ENCODE measurements at regions of chr2 and their contacts with region 1.

Region 1: DNA sequence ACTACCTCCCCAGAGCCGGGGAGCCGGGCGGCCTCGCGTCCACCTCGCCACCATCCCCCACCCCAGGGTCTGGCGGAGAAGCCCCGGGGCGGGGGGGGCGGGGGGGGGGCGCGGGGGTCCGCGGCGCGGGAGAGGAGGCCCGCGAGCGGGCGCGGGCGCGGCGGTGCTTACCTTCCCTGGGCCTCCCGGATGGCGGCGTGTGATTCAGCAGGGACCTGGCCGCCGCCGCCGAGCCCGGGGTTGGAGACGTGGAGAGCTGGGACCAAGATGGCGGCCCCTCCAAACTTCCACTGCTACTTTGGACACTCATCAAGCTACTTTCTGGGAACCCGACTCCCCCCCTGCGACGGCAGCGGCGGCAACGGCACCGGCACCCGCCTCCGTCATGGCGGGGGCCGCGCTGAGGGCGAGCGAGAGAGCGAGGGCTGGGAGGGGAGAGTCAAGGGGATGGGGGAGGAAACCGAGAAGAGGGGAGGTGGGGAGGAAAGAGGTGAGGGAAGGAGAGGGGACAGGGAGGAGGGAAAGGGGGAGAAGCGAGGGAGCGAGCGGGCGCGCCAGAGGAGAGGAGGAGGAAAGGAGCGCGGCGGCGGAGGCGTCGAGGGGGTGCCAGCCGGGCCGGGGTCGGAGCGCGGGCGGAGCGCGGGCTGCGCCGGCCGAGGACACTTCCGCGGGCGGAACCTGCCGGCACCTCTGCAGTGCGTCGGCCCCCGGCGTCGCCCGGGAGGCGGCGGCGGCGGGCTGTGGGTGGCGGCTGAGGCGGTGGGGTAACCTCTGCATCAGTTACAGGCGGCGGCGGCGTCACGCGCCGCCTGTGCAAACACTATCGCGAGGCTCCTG is at the start of gene TLK1:
- DNase-seq: peak; percentile 50 to 72
- ATAC-seq: peak; percentile 79 to 81
- H3K4me3 ChIP-seq: peak within 1 kb of the TSS; percentile 89 to 97 (median 96)
- H3K27ac ChIP-seq: peak within 1 kb of the TSS; percentile 98 to 99 (median 98)
- H3K4me1 ChIP-seq: peaks cover 23 to 28% of the 10 kb centered on the region in 2 donors
- H3K27me3 ChIP-seq: no peaks in the 10 kb centered on the region
- CTCF ChIP-seq: peak in 2 of 5 experiments; percentile 8 to 18
- POLR2A ChIP-seq: peak; percentile 85 to 90
- total RNA-seq, gene TLK1: 7.7 to 14.2 (median 10.0) TPM

Region 2: DNA sequence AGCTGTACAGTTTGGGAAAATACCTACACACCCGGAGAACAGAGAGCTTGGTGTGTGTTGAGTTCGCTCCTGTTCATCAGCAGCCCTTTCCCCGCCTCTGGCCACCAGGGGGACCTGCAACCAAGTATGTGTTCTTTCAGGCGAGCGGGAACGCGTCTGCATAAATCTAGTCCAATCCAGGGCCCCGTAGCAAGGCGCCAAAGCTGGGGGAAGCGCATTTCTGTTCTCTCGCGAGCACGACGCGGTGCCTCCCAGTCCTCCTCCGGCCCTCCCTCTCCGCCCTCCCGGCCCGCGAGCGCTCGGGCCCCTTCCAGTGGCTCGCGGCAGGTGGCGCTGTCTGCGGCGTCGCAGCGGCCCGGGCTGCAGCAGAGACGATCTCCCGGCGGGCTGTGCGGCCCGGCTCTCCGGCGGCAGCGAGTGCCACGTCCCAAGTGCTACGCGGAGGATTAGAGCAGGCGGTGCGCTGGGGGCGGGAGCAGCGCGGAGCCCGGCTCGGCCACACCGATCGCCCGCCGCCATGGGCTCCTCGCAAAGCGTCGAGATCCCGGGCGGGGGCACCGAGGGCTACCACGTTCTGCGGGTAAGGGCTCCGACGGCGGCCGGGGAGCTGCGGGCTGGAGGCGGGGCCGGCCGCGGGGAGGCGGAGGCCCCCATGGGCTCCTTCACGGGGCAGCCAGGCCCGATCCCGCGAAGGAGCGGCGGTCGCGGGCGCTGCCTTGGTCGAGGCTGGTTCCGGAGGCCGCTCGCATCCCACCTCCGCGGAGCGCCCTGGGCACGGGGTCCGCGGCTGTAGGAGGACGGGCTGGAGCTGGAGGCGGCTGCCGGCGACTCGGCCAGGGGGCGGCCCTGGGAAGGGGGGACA is 231.3 kb before region 1 on chr2 and contains the start of gene GORASP2:
- in situ Hi-C with region 1: no loop called
- intact Hi-C with region 1: loop called (anchors 1 kb)
- DNase-seq: peak; percentile 96 to 98
- ATAC-seq: peak; percentile 93 to 94
- H3K4me3 ChIP-seq: peak within 1 kb of the TSS; percentile 77 to 91 (median 84)
- H3K27ac ChIP-seq: peak within 1 kb of the TSS; percentile 86 to 95 (median 92)
- H3K4me1 ChIP-seq: peaks cover 27 to 37% of the 10 kb centered on the region in 2 donors
- H3K27me3 ChIP-seq: no peaks in the 10 kb centered on the region
- CTCF ChIP-seq: peak; percentile 92 to 98 (median 97)
- POLR2A ChIP-seq: peak; percentile 87 to 89
- total RNA-seq, gene GORASP2: 53.9 to 67.0 (median 56.3) TPM

Region 3: GRCh38 chr2:170991399-170992182 is 168.7 kb before region 1 on chr2:
- in situ Hi-C with region 1: loop called in 1 of 4 experiments (anchors 25 kb)
- intact Hi-C with region 1: no loop called
- DNase-seq: no peak
- ATAC-seq: no peak
- H3K4me3 ChIP-seq: no peak overlapping the region
- H3K27ac ChIP-seq: no peak overlapping the region
- H3K4me1 ChIP-seq: no peaks in the 10 kb centered on the region
- H3K27me3 ChIP-seq: no peaks in the 10 kb centered on the region
- CTCF ChIP-seq: no peak
- POLR2A ChIP-seq: no peak

Region 4: GRCh38 chr2:171416009-171416926 is 255.9 kb after region 1 on chr2:
- in situ Hi-C with region 1: loop called in 2 of 4 experiments (anchors 25 kb)
- intact Hi-C with region 1: loop called (anchors 5 kb)
- DNase-seq: peak; percentile 64 to 78
- ATAC-seq: peak; percentile 93 to 97
- H3K4me3 ChIP-seq: no peak overlapping the region
- H3K27ac ChIP-seq: peak overlapping the region in 1 of 4 donors; percentile 1
- H3K4me1 ChIP-seq: peaks cover 0 to 8% of the 10 kb centered on the region in 2 donors
- H3K27me3 ChIP-seq: no peaks in the 10 kb centered on the region
- CTCF ChIP-seq: peak; percentile 61 to 78 (median 66)
- POLR2A ChIP-seq: no peak

Measured in gastrocnemius medialis (tissue), 4 donors.